ENCODE measurements at regions of chr18 and their contacts with region 1.

Region 1: GRCh38 chr18:59996370-59996966 is 96.7 kb downstream of the PMAIP1 start:
- DNase-seq: peak; percentile 58
- H3K4me3 ChIP-seq: no peak overlapping the region; a peak in 1 of 4 replicates
- H3K27ac ChIP-seq: no peak overlapping the region
- H3K4me1 ChIP-seq: no peaks in the 10 kb centered on the region
- H3K27me3 ChIP-seq: no peaks in the 10 kb centered on the region
- CTCF ChIP-seq: peak; percentile 95
- EP300 ChIP-seq: no peak
- RAD21 ChIP-seq: peak; percentile 90

Region 2: GRCh38 chr18:59966913-59967312 is 29.6 kb before region 1 on chr18:
- CTCF ChIA-PET with region 1: no interaction called
- POLR2A ChIA-PET with region 1: no interaction called
- DNase-seq: no peak
- H3K4me3 ChIP-seq: no peak overlapping the region
- H3K27ac ChIP-seq: no peak overlapping the region
- H3K4me1 ChIP-seq: no peaks in the 10 kb centered on the region; a peak in 1 of 4 replicates
- H3K27me3 ChIP-seq: no peaks in the 10 kb centered on the region
- CTCF ChIP-seq: no peak
- EP300 ChIP-seq: no peak
- RAD21 ChIP-seq: no peak

Region 3: GRCh38 chr18:59980188-59980637 is 16.3 kb before region 1 on chr18:
- CTCF ChIA-PET with region 1: interaction called, 27 read pairs
- POLR2A ChIA-PET with region 1: no interaction called
- DNase-seq: no peak
- H3K4me3 ChIP-seq: no peak overlapping the region
- H3K27ac ChIP-seq: no peak overlapping the region
- H3K4me1 ChIP-seq: no peaks in the 10 kb centered on the region; a peak in 1 of 4 replicates
- H3K27me3 ChIP-seq: no peaks in the 10 kb centered on the region
- CTCF ChIP-seq: no peak
- EP300 ChIP-seq: no peak
- RAD21 ChIP-seq: no peak

Region 4: DNA sequence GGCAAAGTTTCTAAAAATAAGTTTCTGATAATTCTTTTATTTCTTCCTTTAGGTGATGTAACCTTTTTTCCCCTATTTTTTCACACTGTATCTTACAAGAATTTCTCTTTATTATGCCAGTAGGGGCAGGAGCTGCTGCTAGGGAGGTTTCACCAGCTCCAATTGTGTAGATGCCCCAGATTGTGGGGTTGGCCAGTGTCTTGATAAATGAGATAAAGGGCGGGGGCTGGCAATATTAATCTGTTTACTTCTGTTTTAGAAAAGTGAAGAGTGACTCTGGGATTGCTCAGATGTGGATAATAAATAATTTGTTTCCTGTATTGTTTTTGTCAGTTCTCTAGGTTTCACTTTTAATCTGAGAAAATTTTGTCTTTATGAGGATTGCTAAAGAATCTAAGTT is 185.8 kb after region 1 on chr18:
- CTCF ChIA-PET with region 1: interaction called, 14 read pairs
- POLR2A ChIA-PET with region 1: no interaction called
- DNase-seq: peak; percentile 38
- H3K4me3 ChIP-seq: no peak overlapping the region
- H3K27ac ChIP-seq: peak overlapping the region in 1 of 2 experiments; percentile 76; a peak in 2 of 4 replicates
- H3K4me1 ChIP-seq: peaks cover 0 to 5% of the 10 kb centered on the region in 2 experiments; a peak in 2 of 4 replicates
- H3K27me3 ChIP-seq: no peaks in the 10 kb centered on the region
- CTCF ChIP-seq: no peak
- EP300 ChIP-seq: peak in 1 of 2 experiments; percentile 86; a peak in 2 of 4 replicates
- RAD21 ChIP-seq: peak; percentile 54

Region 5: GRCh38 chr18:60372596-60372995 is 376.1 kb after region 1 on chr18 and contains the start of gene MC4R:
- CTCF ChIA-PET with region 1: interaction called, 19 read pairs
- POLR2A ChIA-PET with region 1: no interaction called
- DNase-seq: peak; percentile 77
- H3K4me3 ChIP-seq: peak within 1 kb of the TSS; percentile 45 to 59
- H3K27ac ChIP-seq: peak within 1 kb of the TSS; percentile 28 to 95; a peak in 3 of 4 replicates
- H3K4me1 ChIP-seq: peaks cover 0 to 11% of the 10 kb centered on the region in 2 experiments; a peak in 2 of 4 replicates
- H3K27me3 ChIP-seq: no peaks in the 10 kb centered on the region
- CTCF ChIP-seq: no peak
- EP300 ChIP-seq: peak in 1 of 2 experiments; percentile 49; a peak in 1 of 4 replicates
- RAD21 ChIP-seq: peak; percentile 43
- polyA plus RNA-seq, gene MC4R: 0.21 and 0.62 TPM in 2 replicates

Region 6: DNA sequence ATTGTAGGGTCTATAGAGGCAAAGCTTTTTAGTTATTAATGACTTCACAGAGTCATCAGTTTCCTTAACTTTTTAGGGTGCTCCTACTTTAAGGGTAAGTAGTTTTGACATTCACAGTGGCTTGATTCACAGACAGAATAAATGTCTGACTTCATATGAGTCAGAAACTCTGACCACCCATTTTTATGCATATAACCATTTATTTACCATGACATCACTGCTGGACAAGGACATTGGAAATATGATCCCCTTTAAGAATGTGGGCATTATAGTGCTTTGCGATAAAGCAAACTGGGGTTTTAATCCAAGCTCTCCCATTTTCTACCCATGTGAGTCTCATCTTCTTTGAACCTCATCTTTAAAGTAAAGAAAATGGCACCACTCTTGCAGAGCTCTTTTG is 538.1 kb after region 1 on chr18:
- CTCF ChIA-PET with region 1: interaction called, 15 read pairs
- POLR2A ChIA-PET with region 1: no interaction called
- DNase-seq: no peak
- H3K4me3 ChIP-seq: no peak overlapping the region
- H3K27ac ChIP-seq: no peak overlapping the region
- H3K4me1 ChIP-seq: no peaks in the 10 kb centered on the region; a peak in 1 of 4 replicates
- H3K27me3 ChIP-seq: no peaks in the 10 kb centered on the region
- CTCF ChIP-seq: no peak
- EP300 ChIP-seq: no peak
- RAD21 ChIP-seq: no peak

Measured in SK-N-SH (cell line).